MCF 10A (cell line): ENCODE measurements at regions of chr6 and their contacts with region 1.

Region 1: DNA sequence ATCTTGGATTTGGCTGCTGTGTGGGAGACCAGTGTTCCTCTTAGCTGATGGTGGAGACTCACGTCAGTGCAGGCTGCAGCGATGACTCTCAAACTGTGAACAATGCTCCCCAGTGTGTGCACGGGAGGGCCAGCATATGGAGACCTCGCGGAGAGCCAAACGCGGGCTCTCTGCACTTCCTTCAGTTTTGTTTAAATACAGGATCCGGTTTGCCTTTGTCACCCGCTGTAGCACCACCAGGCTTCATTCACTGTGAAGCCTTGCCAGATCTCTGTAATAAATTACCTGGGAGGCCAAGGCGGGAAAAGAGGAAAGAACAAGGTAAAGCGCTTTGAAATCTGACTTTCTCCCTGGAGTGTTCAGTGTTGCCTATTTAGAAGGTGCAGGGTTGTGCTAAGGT is 30.7 kb upstream of the TMEM14A start:
- DNase-seq: no peak
- H3K4me3 Mint-ChIP-seq: no peak overlapping the region
- H3K27ac Mint-ChIP-seq: no peak overlapping the region
- H3K4me1 Mint-ChIP-seq: no peaks in the 10 kb centered on the region
- H3K27me3 Mint-ChIP-seq: peaks cover 54% of the 10 kb centered on the region
- CTCF ChIP-seq: no peak

Region 2: DNA sequence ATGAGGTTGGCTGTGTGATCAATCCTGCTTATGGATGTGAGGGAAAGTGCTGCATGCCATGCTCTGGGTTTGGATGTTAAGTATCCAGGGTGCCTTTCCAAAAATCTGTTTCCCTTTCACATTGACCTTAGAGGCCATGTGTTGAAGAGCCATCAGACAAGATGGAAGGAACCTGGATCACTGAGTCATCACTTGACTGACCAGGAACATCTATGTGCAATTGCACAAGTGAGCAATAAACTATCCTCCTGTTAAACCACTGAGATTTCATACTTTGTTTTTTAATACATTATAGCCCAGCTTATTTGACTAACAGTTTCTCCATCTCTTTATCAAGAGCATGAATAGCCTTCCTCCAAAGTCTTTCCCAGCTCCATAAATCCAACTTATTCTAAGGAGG is 13.0 kb after region 1 on chr6:
- CTCF ChIA-PET with region 1: interaction called, 67 read pairs
- POLR2A ChIA-PET with region 1: interaction called, 8 read pairs
- intact Hi-C with region 1: no loop called
- DNase-seq: no peak
- H3K4me3 Mint-ChIP-seq: no peak overlapping the region
- H3K27ac Mint-ChIP-seq: no peak overlapping the region
- H3K4me1 Mint-ChIP-seq: no peaks in the 10 kb centered on the region
- H3K27me3 Mint-ChIP-seq: no peaks in the 10 kb centered on the region
- CTCF ChIP-seq: no peak